ENCODE measurements at regions of chr11 and their contacts with region 1.

Region 1: GRCh38 chr11:92136797-92137196 is 87.8 kb upstream of the FAT3 start:
- DNase-seq: no peak
- H3K4me3 ChIP-seq: no peak overlapping the region
- H3K27ac ChIP-seq: no peak overlapping the region
- H3K4me1 ChIP-seq: no peaks in the 10 kb centered on the region
- H3K27me3 ChIP-seq: peaks cover 0 to 1% (median 0%) of the 10 kb centered on the region in 4 experiments; a peak in 2 of 7 replicates
- CTCF ChIP-seq: peak; percentile 52 to 94 (median 81)
- EP300 ChIP-seq: no peak
- POLR2A ChIP-seq: no peak
- RAD21 ChIP-seq: peak; percentile 75 to 82

Region 2: DNA sequence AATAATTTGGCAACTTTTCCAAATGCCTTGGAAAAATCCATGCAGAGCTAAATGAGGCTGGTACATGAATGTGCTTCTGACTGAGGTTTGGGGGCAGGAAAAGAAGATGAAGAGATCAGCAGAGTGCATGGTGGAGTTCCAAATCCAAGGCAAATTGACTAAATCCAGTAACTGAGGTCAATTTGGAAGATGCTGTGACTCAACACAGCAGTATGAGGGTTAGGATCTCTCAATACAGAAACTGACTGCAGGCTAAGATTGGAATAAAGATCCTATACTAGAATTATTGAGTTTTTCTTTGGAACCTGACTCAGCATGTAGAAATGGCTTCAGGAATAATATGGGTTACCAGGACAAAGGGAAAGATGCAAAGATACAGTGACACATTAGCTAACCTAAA is 11.5 kb before region 1 on chr11:
- CTCF ChIA-PET with region 1: interaction called, 11 read pairs
- POLR2A ChIA-PET with region 1: no interaction called
- DNase-seq: no peak
- H3K4me3 ChIP-seq: no peak overlapping the region
- H3K27ac ChIP-seq: no peak overlapping the region
- H3K4me1 ChIP-seq: no peaks in the 10 kb centered on the region
- H3K27me3 ChIP-seq: peaks cover 0 to 4% (median 0%) of the 10 kb centered on the region in 4 experiments; a peak in 1 of 7 replicates
- CTCF ChIP-seq: no peak
- EP300 ChIP-seq: no peak
- POLR2A ChIP-seq: no peak
- RAD21 ChIP-seq: no peak

Region 3: DNA sequence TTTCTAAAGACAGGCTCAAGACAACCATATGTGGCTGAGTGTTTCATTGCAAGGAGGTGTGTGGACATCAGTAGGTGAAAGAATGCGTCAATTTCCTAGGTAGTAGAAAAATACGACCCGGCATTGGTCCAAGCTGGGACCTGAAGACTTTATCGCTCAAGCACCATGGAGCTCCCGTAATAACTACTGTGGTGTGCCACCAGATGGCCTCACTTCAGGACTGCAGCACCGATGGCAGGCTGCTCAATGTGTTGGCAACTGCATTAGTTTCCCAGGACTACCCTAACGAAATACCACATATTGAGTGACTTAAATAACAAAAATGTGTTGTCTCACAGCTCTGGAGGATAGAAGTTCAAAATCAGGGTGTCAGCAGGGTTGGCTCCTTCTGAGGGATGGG is 15.4 kb after region 1 on chr11:
- CTCF ChIA-PET with region 1: interaction called, 17 read pairs
- POLR2A ChIA-PET with region 1: no interaction called
- DNase-seq: peak in 1 of 2 experiments; percentile 27
- H3K4me3 ChIP-seq: no peak overlapping the region
- H3K27ac ChIP-seq: no peak overlapping the region
- H3K4me1 ChIP-seq: peaks cover 0 to 7% (median 0%) of the 10 kb centered on the region in 4 experiments; a peak in 2 of 7 replicates
- H3K27me3 ChIP-seq: no peaks in the 10 kb centered on the region
- CTCF ChIP-seq: peak; percentile 56 to 63 (median 63)
- EP300 ChIP-seq: no peak
- POLR2A ChIP-seq: no peak
- RAD21 ChIP-seq: peak; percentile 61 to 75

Region 4: DNA sequence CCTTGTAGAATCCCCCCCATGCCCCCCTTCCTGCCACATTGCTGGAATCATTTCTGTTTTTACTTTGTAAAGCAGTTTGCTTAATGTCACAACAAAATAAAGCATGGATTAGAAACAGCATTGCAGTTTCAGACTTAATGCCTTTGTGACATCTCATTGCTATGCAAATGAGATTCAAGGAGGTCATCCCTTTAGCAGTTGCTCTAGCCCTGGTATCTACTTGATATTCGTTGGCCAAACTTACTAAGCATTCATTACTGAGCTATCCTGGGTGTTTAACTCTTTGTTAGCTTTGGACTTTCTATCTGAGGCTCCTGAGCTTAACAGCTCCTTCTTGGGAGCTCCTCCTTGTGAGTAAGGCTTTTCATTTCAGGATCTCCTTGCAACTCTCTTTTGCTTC is 104.1 kb after region 1 on chr11:
- CTCF ChIA-PET with region 1: no interaction called
- POLR2A ChIA-PET with region 1: no interaction called
- DNase-seq: no peak
- H3K4me3 ChIP-seq: peak overlapping the region in 1 of 4 experiments; percentile 1; a peak in 1 of 8 replicates
- H3K27ac ChIP-seq: no peak overlapping the region
- H3K4me1 ChIP-seq: peaks cover 3 to 17% (median 13%) of the 10 kb centered on the region in 4 experiments; a peak in 5 of 7 replicates
- H3K27me3 ChIP-seq: no peaks in the 10 kb centered on the region
- CTCF ChIP-seq: no peak
- EP300 ChIP-seq: no peak
- POLR2A ChIP-seq: no peak
- RAD21 ChIP-seq: no peak; a peak in 1 of 4 replicates